OCI-LY7 (cell line): ENCODE measurements at regions of chr17 and their contacts with region 1.

Region 1: DNA sequence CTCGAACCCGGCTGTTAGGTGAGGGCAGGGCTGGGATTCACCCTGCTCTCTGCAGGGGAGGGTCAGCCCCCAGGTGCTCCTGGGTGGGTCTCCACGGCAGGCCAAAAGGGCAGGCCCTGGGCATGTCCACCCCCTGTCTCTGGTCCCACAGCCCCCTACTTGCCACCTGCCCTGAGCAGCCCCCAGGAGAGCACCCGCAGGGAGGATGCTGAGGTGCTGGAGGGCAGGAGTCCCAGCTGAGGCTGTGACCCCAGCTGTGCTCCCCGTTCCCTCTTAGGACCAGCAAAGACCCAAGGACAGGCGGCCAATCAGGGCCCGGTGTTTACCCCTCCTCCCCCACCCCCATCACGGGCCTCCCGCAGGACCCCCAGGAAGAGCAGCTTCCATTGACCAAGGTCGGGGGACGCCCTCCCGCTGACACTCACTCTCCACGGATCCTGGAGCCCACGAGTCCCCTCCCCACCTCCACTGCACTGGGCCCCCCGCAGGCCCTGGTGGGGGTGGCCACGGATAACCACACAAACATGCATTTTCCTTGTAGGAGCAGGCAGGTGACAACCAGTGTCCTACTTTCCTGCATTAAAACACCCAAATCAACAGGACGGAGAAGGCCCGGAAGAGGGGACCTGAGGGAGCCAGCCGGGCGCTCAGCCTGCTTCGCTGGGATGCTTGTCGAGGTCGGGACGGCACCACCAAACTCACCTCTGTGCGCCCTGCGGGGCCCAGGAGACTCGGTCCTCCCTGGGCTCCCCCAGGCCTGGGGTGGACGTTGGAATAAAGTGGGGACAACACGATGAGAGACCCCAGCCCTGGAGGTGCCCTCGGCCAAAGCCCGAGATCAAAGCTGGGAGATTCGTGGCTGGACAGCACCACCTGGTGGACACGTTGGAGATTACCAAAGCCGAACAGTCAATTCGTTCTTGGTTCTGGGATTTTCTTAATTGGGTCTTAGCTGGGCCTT is 22.5 kb upstream of the ENPP7 start:
- DNase-seq: peak; percentile 71
- H3K4me3 ChIP-seq: no peak overlapping the region
- H3K27ac ChIP-seq: no peak overlapping the region
- H3K4me1 ChIP-seq: peaks cover 14% of the 10 kb centered on the region
- CTCF ChIP-seq: peak; percentile 84

Region 2: DNA sequence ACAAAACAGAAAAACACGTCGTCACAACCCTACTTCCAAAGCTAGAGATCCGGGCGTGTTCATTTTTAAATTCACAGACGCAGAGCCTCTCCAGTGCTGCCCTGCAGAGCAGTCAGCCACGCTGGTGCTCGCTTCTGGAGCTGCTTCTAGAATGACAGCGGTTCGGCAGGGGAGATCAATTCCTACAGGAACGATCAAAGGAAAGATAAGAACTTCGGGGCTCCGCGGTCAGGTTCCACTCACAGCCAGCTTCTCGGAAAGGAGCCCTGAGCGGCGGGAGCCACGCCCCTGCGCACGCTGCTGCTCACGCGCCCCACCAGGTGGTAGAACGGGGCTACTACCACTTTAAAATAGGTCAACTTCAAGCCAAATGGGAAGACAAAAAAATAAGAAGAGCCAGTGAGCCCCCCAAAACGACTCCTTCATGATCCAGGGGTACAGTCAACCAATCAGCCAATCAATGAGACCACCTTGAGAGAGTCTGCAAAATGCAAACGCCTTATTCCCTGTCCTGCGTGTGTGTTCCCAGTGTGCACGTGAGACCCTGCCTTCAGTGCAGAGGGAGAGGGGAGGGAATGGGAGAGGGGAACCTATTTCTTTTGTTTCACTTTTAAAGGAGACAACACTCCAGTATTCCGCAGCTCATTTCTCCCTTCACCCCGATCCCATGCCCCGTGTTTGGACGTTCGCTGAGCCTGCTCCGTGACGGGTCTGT is 307.1 kb before region 1 on chr17:
- CTCF ChIA-PET with region 1: no interaction called
- POLR2A ChIA-PET with region 1: no interaction called
- intact Hi-C with region 1: loop called (anchors 5 kb)
- DNase-seq: peak; percentile 71
- H3K4me3 ChIP-seq: no peak overlapping the region
- H3K27ac ChIP-seq: no peak overlapping the region
- H3K4me1 ChIP-seq: no peaks in the 10 kb centered on the region
- CTCF ChIP-seq: peak; percentile 97

Region 3: GRCh38 chr17:79612468-79613194 is 95.6 kb before region 1 on chr17:
- CTCF ChIA-PET with region 1: no interaction called
- POLR2A ChIA-PET with region 1: no interaction called
- intact Hi-C with region 1: loop called (anchors 2 kb)
- DNase-seq: peak; percentile 72
- H3K4me3 ChIP-seq: no peak overlapping the region
- H3K27ac ChIP-seq: no peak overlapping the region
- H3K4me1 ChIP-seq: no peaks in the 10 kb centered on the region
- CTCF ChIP-seq: peak; percentile 97

Region 4: DNA sequence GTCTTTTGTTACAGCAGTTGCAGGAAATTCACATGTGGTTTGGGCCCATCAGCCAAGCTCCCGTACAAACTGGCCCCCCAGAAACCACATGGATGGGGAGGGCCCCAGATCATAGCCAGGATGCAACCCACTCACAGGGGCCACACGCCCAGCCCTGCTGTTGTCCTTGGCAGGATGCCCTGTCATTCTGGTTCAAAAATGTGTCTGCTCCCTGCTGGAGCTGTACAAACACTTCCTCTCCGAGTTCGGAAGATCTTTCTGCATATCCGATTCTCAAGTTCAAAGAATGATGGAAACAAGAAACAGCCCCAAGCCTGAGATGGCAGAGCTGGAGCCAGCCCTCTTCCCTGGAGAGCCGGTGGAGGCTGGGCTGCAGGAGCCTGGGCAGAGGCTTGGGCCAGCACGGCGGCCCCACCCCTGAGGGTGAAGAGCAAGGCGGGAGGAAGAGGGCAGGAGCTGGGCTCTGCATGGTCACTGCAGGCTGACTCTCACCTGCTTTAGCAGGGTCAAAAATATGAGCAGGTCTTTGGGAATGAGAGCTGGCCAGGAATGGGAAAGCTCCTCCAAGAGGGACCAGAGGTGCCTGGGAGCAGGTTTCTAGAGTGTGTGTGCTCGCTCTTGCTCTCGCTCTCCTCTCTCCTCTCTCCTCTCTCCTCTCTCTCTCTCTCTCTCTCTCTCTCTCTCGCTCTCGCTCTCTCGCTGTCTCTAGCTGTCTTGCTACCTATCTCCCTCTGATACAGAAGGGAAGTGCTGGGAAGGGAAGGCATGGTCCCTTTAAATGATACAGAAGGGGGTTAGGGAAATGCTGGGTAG is 12.2 kb before region 1 on chr17:
- CTCF ChIA-PET with region 1: no interaction called
- POLR2A ChIA-PET with region 1: no interaction called
- intact Hi-C with region 1: no loop called
- DNase-seq: no peak
- H3K4me3 ChIP-seq: no peak overlapping the region
- H3K27ac ChIP-seq: no peak overlapping the region
- H3K4me1 ChIP-seq: no peaks in the 10 kb centered on the region
- CTCF ChIP-seq: no peak